Mammary epithelial cell (primary cell): ENCODE measurements at regions of chr4 and their contacts with region 1.

Region 1: GRCh38 chr4:38062088-38062893 is 102.1 kb downstream of the PTTG2 start:
- DNase-seq: peak; percentile 50
- H3K4me3 ChIP-seq: peak overlapping the region; percentile 12 to 26 (median 18)
- H3K27ac ChIP-seq: peak overlapping the region; percentile 47
- H3K4me1 ChIP-seq: no peaks in the 10 kb centered on the region
- H3K27me3 ChIP-seq: no peaks in the 10 kb centered on the region
- CTCF ChIP-seq: peak; percentile 67 to 82

Region 2: GRCh38 chr4:38166082-38166481 is 103.8 kb after region 1 on chr4:
- CTCF ChIA-PET with region 1: no interaction called
- dilution Hi-C with region 1: no loop called
- in situ Hi-C with region 1: loop called in 1 of 2 experiments (anchors 10 kb)
- intact Hi-C with region 1: loop called (anchors 1 kb)
- DNase-seq: no peak
- H3K4me3 ChIP-seq: no peak overlapping the region
- H3K27ac ChIP-seq: no peak overlapping the region
- H3K4me1 ChIP-seq: peaks cover 32% of the 10 kb centered on the region
- H3K27me3 ChIP-seq: no peaks in the 10 kb centered on the region
- CTCF ChIP-seq: peak in 1 of 2 donors; percentile 36

Region 3: DNA sequence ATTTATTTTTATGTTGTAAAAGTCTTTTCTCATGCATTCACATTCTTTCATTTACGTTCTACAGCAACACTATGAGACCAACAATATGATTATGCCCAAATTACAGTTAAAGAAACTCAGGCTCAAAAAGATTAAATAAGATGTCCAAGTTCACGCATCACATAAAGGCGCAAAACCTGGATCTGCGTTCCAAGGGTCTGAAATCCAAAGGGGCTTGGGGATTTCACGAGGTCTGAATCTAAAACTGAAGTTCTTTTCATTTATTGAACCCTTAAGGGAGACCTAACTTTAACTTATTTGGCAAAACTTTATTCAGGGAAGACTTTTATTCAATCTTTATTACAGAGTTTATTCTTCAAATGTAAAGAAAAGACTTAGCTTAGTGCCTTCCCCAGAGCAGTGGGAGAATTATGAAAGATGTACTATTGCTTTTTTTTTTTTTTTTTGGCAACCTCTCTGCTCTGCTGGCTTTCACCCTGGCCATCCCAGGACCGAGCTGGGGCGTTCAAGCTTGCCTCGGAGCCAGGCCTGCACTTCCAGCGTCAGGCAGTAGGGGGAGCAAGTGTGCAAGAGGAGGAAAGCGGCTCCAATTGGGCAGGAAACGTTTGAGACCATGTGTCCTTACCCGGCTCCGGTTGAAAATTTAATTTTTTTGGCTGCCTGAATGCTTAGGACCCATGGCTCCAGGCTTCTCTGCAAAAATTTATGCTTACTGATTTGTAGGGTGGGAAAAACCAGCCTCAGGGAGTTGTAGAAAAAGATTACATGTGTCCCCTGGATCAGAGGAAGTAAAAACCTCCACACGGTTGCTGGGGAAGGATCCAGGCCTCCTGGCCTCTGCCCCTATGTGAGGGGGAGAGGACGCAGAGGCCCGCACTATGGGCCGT is 257.4 kb after region 1 on chr4:
- CTCF ChIA-PET with region 1: no interaction called
- dilution Hi-C with region 1: no loop called
- in situ Hi-C with region 1: loop called in 1 of 2 experiments (anchors 10 kb)
- intact Hi-C with region 1: loop called (anchors 1 kb)
- DNase-seq: peak; percentile 84
- H3K4me3 ChIP-seq: no peak overlapping the region
- H3K27ac ChIP-seq: peak overlapping the region; percentile 79
- H3K4me1 ChIP-seq: peaks cover 26% of the 10 kb centered on the region
- H3K27me3 ChIP-seq: no peaks in the 10 kb centered on the region
- CTCF ChIP-seq: peak; percentile 98 to 99

Region 4: DNA sequence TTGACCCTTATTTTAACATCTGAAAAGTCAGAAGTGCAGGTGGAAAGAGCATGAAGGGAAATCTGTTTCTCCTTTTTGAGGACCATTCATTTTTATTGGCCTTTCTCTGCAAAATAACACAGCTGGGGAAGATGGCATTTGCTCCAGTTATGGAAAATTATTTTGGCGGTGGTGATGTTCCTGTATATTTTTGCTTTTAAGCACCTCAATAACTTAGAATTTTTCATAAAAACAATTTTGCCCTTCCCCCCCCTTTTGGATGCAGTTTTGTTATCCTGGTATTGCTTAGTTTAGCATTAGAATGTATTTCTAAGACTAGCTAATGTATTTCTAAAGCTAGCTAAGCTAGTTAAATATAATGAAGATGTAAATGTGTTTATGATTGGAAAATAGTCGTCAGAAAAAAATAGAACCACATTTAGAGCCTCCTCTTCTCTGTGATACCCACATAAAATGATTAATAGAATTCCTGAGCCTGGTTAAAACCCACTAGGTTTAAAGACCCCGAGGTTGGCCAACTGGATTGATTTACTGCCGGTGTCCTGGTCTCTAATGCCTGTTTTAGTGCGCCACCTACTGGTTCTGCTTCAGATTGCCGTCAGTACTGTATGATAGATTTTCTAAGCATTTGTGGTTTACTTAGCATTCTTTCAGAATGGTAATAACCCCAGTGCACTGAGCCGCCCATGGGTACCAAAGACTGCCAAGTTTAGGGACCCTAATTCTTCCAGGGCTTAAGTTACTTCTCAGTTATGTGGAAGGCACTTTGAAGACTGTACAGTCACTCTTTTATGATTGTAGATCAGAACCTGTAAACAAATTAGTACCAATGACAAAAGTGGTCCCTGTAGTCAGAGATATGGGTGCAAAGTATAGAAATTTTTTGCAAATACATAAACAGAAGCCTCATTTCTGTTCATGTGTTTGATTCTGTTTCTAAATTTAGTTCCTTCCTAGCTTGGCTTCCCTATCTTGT is 613.1 kb after region 1 on chr4:
- CTCF ChIA-PET with region 1: no interaction called
- dilution Hi-C with region 1: no loop called
- in situ Hi-C with region 1: loop called in 1 of 2 experiments (anchors 10 kb)
- intact Hi-C with region 1: loop called (anchors 1 kb)
- DNase-seq: peak; percentile 68
- H3K4me3 ChIP-seq: no peak overlapping the region
- H3K27ac ChIP-seq: peak overlapping the region; percentile 82
- H3K4me1 ChIP-seq: peaks cover 52% of the 10 kb centered on the region
- H3K27me3 ChIP-seq: no peaks in the 10 kb centered on the region
- CTCF ChIP-seq: peak; percentile 89 to 94

Region 5: GRCh38 chr4:38782452-38783108 is 720.3 kb after region 1 on chr4 and contains the start of gene TLR10:
- CTCF ChIA-PET with region 1: no interaction called
- dilution Hi-C with region 1: no loop called
- in situ Hi-C with region 1: no loop called
- intact Hi-C with region 1: loop called (anchors 2 kb)
- DNase-seq: peak; percentile 30
- H3K4me3 ChIP-seq: no peak within 1 kb of the TSS
- H3K27ac ChIP-seq: no peak within 1 kb of the TSS
- H3K4me1 ChIP-seq: no peaks in the 10 kb centered on the region
- H3K27me3 ChIP-seq: no peaks in the 10 kb centered on the region
- CTCF ChIP-seq: peak; percentile 53 to 66
- total RNA-seq, gene TLR10: not detected